ENCODE measurements at regions of chr2 and their contacts with region 1.

Region 1: DNA sequence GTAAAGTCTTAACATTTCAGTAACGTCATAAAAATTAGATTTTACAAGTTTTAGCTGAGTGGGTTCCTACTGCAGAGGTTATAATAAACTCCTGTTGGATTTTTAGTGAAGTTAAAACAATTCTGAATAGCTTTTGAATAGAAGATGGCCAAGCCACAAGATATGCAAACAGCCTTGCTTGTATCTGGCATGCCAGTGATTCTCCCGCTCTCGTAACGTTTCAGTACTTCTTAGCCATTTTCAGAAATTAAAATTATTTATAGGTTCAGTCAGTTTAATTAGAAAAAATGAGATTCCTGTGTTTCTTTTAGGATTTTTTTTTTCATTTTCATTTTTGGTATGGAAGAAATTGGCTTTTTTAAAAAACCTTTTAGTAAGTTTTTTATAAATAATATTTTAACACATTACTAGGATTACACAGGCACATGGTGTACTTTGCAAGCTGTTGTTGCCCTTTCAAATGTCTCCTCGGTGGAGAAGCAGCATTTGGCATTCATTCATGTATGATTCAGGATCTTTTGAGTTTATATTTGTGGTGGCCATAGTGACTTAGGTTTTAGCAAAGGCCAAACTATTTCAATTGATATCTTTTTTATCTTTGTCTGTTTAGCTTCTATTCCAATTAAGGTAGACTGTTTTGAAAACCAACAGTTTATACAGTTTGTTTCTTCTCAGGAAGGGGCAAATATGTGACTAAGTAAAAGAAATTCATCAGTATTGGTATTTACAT is 30.6 kb upstream of the RND3 start:
- DNase-seq: no peak

Region 2: GRCh38 chr2:150469706-150470274 is 48.3 kb before region 1 on chr2:
- intact Hi-C with region 1: loop called in 1 of 2 experiments (anchors 2 kb)
- DNase-seq: no peak

Region 3: DNA sequence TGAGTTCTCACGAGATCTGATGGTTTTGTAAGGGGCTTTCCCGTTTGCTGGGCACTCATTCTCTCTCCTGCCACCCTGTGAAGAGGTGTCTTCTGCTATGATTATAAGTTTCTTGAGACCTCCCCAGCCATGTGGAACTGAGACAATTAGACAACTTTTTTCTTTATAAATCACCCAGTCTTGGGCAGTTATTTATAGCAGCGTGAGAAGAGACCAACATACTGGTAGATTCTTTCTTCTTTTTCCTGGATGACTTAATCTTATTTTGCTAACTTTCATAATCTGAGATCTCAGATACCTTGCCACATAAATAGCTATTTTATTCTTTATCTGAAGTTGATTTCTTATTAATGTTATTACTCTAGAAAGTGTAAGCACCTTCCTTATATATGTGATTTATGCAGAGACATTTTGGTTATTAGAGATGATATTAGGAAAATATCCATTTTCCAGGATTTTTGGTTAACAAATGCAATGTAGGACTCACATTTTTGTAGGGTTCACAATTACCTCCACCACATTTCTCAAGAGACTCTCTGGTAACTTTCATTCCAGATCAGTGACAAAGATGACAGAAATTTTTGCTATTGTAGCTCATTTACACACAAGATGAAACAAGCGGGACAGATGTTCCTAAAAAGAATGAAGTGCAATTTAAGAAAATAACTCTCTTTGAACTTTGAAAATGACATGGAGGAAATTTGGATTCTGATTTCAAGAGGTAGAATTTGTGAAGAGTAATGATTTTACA is 67.3 kb after region 1 on chr2:
- intact Hi-C with region 1: no loop called
- DNase-seq: no peak

Region 4: GRCh38 chr2:150610671-150611279 is 92.7 kb after region 1 on chr2:
- intact Hi-C with region 1: loop called in 1 of 2 experiments (anchors 10 kb)
- DNase-seq: no peak

Measured in posterior vena cava (tissue), 2 donors.